Activated CD4-positive, alpha-beta memory T cell treated with anti-CD3 and anti-CD28 coated beads, Interleukin-2, amount 10 ng/mL, durations not matched to agents 7 days and 5 days (primary cell): ENCODE measurements at regions of chr15 and their contacts with region 1.

Region 1: GRCh38 chr15:72722071-72722696 is 36.2 kb downstream of the BBS4 start:
- DNase-seq: peak; percentile 77
- H3K4me3 Mint-ChIP-seq: no peak overlapping the region
- H3K27ac Mint-ChIP-seq: no peak overlapping the region
- H3K4me1 Mint-ChIP-seq: peaks cover 1% of the 10 kb centered on the region
- H3K27me3 Mint-ChIP-seq: no peaks in the 10 kb centered on the region

Region 2: DNA sequence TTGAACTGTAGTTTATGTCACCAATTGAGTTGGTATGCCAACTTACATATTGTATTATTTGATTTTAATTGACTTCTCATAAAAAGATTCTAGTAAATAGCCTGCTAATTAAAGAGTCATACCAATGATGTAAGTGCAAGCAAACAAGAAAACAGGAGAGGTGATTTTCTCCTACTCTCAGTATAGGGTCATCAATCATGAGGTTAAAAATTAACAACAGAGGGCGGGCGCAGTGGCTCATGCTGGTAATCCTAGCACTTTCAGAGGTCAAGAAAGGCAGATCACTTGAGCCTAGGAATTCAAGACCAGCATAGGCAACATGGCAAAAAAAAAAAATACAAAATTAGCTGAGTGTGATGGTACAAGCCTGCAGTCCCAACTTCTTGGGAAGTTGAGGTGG is 713.0 kb before region 1 on chr15:
- CTCF ChIA-PET with region 1: no interaction called
- POLR2A ChIA-PET with region 1: no interaction called
- DNase-seq: no peak
- H3K4me3 Mint-ChIP-seq: no peak overlapping the region
- H3K27ac Mint-ChIP-seq: no peak overlapping the region
- H3K4me1 Mint-ChIP-seq: no peaks in the 10 kb centered on the region
- H3K27me3 Mint-ChIP-seq: no peaks in the 10 kb centered on the region

Region 3: DNA sequence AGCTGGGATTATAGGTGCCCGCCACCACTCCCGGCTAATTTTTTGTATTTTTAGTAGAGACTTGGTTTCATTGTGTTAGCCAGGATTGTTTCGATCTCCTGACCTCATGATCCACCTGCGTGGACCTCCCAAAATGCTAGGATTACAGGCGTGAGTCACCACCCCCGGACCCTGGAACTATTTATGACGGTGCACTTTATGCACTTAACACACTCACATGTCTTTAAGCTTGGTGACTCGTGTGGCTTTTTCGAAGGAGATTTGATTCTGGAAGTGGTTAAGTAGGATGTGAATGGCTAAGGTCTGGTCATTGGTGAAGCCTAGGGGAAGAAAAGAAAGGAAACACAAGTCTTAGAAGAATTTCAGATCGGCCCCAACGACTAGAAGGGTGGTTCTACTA is 15.9 kb before region 1 on chr15:
- CTCF ChIA-PET with region 1: interaction called, 13 read pairs
- POLR2A ChIA-PET with region 1: no interaction called
- DNase-seq: no peak
- H3K4me3 Mint-ChIP-seq: no peak overlapping the region
- H3K27ac Mint-ChIP-seq: no peak overlapping the region
- H3K4me1 Mint-ChIP-seq: peaks cover 1% of the 10 kb centered on the region
- H3K27me3 Mint-ChIP-seq: no peaks in the 10 kb centered on the region

Region 4: DNA sequence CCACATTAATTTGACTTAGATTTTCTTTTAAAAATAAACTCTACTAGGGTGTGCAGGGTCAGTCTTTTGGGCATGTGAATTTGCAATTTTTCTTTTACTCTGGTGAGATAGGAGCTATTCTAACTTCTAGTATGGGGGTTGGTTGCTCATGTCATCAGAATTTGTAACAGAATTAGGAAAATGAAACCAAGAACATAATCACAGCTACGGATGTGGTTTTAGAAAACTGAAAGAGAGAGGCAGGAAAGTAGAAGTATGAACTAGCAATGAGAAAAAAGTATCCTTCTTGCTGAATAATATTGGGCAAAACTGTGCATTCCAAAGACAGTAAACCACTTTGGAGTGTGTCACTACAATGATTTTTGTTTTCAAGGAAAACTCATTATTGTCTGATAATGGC is 18.0 kb after region 1 on chr15:
- CTCF ChIA-PET with region 1: interaction called, 39 read pairs
- POLR2A ChIA-PET with region 1: interaction called, 3 read pairs
- DNase-seq: no peak
- H3K4me3 Mint-ChIP-seq: peak overlapping the region; percentile 46
- H3K27ac Mint-ChIP-seq: peak overlapping the region; percentile 83
- H3K4me1 Mint-ChIP-seq: peaks cover 46% of the 10 kb centered on the region
- H3K27me3 Mint-ChIP-seq: no peaks in the 10 kb centered on the region

Region 5: GRCh38 chr15:72770673-72771328 is 48.6 kb after region 1 on chr15:
- CTCF ChIA-PET with region 1: interaction called, 13 read pairs
- POLR2A ChIA-PET with region 1: no interaction called
- DNase-seq: no peak
- H3K4me3 Mint-ChIP-seq: no peak overlapping the region
- H3K27ac Mint-ChIP-seq: peak overlapping the region; percentile 40
- H3K4me1 Mint-ChIP-seq: peaks cover 40% of the 10 kb centered on the region
- H3K27me3 Mint-ChIP-seq: no peaks in the 10 kb centered on the region

Region 6: GRCh38 chr15:73081321-73081958 is 359.3 kb after region 1 on chr15:
- CTCF ChIA-PET with region 1: interaction called, 20 read pairs
- POLR2A ChIA-PET with region 1: no interaction called
- DNase-seq: no peak
- H3K4me3 Mint-ChIP-seq: no peak overlapping the region
- H3K27ac Mint-ChIP-seq: no peak overlapping the region
- H3K4me1 Mint-ChIP-seq: peaks cover 6% of the 10 kb centered on the region
- H3K27me3 Mint-ChIP-seq: no peaks in the 10 kb centered on the region

Region 7: GRCh38 chr15:73273181-73274002 is 551.2 kb after region 1 on chr15:
- CTCF ChIA-PET with region 1: interaction called, 10 read pairs
- POLR2A ChIA-PET with region 1: no interaction called
- DNase-seq: peak; percentile 52
- H3K4me3 Mint-ChIP-seq: no peak overlapping the region
- H3K27ac Mint-ChIP-seq: no peak overlapping the region
- H3K4me1 Mint-ChIP-seq: peaks cover 2% of the 10 kb centered on the region
- H3K27me3 Mint-ChIP-seq: no peaks in the 10 kb centered on the region